AG04450 (cell line): ENCODE measurements at regions of chr6 and their contacts with region 1.

Region 1: DNA sequence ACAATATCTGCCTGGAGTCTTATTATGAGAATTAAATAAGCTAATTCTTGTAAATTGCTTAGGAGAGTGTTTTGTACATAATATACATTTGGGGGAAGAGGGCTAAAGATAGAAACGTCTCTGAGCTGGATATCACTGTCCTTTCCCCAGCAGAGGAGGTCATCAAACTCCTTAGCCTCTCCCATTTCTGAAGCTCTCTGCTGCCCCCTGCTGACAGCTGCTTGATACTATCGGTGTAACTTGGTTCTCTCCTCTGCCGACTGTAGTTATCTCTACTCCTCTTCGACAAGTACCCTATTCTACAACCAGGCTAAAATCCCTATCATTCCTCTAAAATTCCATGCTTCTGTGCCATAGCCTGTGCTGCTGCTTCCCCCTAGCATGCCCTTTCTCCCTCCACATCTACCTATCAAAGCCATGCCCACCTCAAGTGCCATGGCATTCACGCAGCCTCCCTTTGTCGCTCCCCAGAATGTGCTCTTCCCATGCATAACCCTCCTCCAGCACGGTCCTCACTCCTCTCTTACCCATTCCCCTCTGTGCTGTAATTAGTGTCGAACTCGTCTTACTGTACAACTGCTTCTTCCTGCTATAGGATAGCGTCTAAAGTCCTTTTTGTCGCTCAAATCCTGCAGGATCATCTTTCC is 101.2 kb downstream of the EPM2A start:
- DNase-seq: peak; percentile 59
- H3K4me3 ChIP-seq: no peak overlapping the region
- H3K27ac ChIP-seq: no peak overlapping the region
- H3K27me3 ChIP-seq: no peaks in the 10 kb centered on the region
- CTCF ChIP-seq: peak; percentile 90

Region 2: GRCh38 chr6:144588674-144589325 is 1045.3 kb before region 1 on chr6:
- CTCF ChIA-PET with region 1: interaction called, 48 read pairs
- POLR2A ChIA-PET with region 1: no interaction called
- DNase-seq: no peak
- H3K4me3 ChIP-seq: no peak overlapping the region
- H3K27ac ChIP-seq: no peak overlapping the region
- H3K27me3 ChIP-seq: no peaks in the 10 kb centered on the region
- CTCF ChIP-seq: no peak

Region 3: DNA sequence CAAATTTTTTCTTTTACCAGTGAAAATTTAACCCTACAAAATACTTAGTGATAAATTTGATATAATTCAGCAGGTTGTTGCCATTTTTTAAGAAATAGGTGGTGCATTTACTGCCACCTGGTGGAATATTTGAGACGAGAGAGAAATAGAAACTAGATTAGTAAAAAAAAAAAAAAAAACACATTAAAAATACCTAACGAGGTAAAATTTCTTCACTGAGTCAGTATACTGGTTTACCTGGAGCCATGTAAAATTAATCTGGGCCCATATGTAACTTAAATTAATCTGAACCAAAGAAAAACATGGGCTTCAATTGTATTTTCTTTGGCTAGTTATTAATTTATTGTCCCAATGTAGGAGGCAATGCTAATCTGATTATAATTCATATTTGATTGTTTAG is 419.5 kb before region 1 on chr6:
- CTCF ChIA-PET with region 1: interaction called, 11 read pairs
- POLR2A ChIA-PET with region 1: no interaction called
- DNase-seq: no peak
- H3K4me3 ChIP-seq: no peak overlapping the region
- H3K27ac ChIP-seq: no peak overlapping the region
- H3K27me3 ChIP-seq: no peaks in the 10 kb centered on the region
- CTCF ChIP-seq: peak; percentile 59

Region 4: DNA sequence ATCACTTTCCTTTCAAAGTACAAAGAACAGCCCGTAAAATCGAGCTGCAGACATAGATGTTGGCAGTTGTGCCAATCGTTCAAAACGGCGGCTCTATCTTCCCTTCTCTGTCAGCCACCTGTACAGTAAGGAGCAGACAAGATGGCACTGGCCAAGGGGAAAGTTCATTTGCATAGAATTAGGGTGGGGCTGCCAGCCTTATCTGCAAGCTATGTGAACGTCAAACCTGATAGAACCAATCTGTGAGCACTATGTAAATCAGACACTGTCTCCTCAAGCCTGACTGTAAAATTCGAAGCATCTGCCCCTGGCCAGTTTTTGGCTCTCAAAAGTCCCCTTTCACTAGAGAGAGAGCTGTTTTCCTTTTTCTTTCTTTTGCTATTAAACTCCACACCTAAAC is 273.2 kb before region 1 on chr6:
- CTCF ChIA-PET with region 1: no interaction called
- POLR2A ChIA-PET with region 1: no interaction called
- DNase-seq: no peak
- H3K4me3 ChIP-seq: no peak overlapping the region
- H3K27ac ChIP-seq: no peak overlapping the region
- H3K27me3 ChIP-seq: no peaks in the 10 kb centered on the region
- CTCF ChIP-seq: no peak

Region 5: GRCh38 chr6:145608850-145609249 is 25.3 kb before region 1 on chr6:
- CTCF ChIA-PET with region 1: interaction called, 12 read pairs
- POLR2A ChIA-PET with region 1: no interaction called
- DNase-seq: no peak
- H3K4me3 ChIP-seq: no peak overlapping the region
- H3K27ac ChIP-seq: no peak overlapping the region
- H3K27me3 ChIP-seq: no peaks in the 10 kb centered on the region
- CTCF ChIP-seq: no peak

Region 6: DNA sequence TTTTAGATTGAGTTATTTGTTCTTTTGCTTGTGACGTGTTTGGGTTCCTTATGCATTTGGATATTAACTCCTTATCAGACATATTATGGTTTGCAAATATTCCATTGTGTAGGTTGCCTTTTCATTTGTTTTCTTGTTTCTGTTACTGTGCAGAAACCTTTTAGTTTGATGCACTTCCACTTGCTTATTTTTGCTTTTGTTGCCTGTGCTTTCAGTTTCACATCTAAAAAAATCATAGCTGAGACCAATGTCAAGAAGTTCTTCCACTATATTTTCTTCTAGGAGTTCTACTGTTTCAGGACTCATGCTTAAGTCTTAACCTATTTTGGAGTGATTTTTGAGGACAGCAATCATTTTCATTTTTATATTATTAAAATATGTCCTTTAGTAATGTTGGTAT is 12.3 kb before region 1 on chr6:
- CTCF ChIA-PET with region 1: interaction called, 35 read pairs
- POLR2A ChIA-PET with region 1: no interaction called
- DNase-seq: no peak
- H3K4me3 ChIP-seq: no peak overlapping the region
- H3K27ac ChIP-seq: no peak overlapping the region
- H3K27me3 ChIP-seq: no peaks in the 10 kb centered on the region
- CTCF ChIP-seq: no peak

Region 7: DNA sequence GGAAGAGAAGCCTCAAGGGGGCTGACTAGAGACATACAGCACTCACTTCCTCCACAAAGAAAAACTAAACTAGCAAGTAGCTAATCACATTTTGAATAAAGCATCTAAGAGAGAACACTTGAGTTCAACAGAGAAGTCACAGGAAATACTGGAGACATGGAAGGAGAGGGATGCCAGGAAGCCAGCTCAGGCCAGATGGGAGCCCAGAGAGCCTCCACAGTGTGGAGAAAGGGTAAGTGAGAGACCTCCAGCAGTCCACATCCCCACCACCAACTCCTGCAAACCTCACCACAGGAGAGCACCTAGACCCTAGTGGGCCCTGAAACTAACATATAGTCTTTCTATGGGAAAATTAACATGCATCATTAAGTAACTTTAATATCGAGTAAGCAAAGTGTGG is 22.0 kb after region 1 on chr6:
- CTCF ChIA-PET with region 1: interaction called, 39 read pairs
- POLR2A ChIA-PET with region 1: no interaction called
- DNase-seq: no peak
- H3K4me3 ChIP-seq: no peak overlapping the region
- H3K27ac ChIP-seq: no peak overlapping the region
- H3K27me3 ChIP-seq: no peaks in the 10 kb centered on the region
- CTCF ChIP-seq: 0 out of 2 replicates have a peak, but pooled peaks have one; percentile 9

Region 8: GRCh38 chr6:145887969-145888368 is 253.9 kb after region 1 on chr6:
- CTCF ChIA-PET with region 1: interaction called, 14 read pairs
- POLR2A ChIA-PET with region 1: no interaction called
- DNase-seq: no peak
- H3K4me3 ChIP-seq: no peak overlapping the region
- H3K27ac ChIP-seq: no peak overlapping the region
- H3K27me3 ChIP-seq: no peaks in the 10 kb centered on the region
- CTCF ChIP-seq: peak; percentile 72